CD14-positive monocyte (primary cell): ENCODE measurements at regions of chr16 and their contacts with region 1.

Region 1: GRCh38 chr16:84774810-84775209 is 45.0 kb upstream of the CRISPLD2 start:
- DNase-seq: peak; percentile 80 to 92 (median 88)
- H3K4me3 ChIP-seq: peak overlapping the region in 1 of 3 experiments; percentile 28
- H3K4me3 Mint-ChIP-seq: peak overlapping the region in 1 of 2 donors; percentile 71
- H3K27ac ChIP-seq: peak overlapping the region; percentile 77 to 95
- H3K27ac Mint-ChIP-seq: peak overlapping the region; percentile 85 to 98 (median 95)
- H3K4me1 ChIP-seq: peaks cover 24 to 26% of the 10 kb centered on the region in 2 donors
- H3K4me1 Mint-ChIP-seq: peaks cover 25% of the 10 kb centered on the region
- H3K27me3 ChIP-seq: no peaks in the 10 kb centered on the region
- H3K27me3 Mint-ChIP-seq: peaks cover 0 to 2% (median 2%) of the 10 kb centered on the region in 3 donors
- CTCF ChIP-seq: no peak

Region 2: GRCh38 chr16:84819644-84820324 is 45.0 kb after region 1 on chr16 and contains the start of gene CRISPLD2:
- intact Hi-C with region 1: loop called in 1 of 2 experiments (anchors 5 kb)
- DNase-seq: peak; percentile 92 to 93 (median 93)
- H3K4me3 ChIP-seq: peak within 1 kb of the TSS; percentile 51 to 89 (median 81)
- H3K4me3 Mint-ChIP-seq: peak within 1 kb of the TSS; percentile 86 to 98
- H3K27ac ChIP-seq: peak within 1 kb of the TSS in 1 of 2 donors; percentile 66
- H3K27ac Mint-ChIP-seq: peak within 1 kb of the TSS; percentile 50 to 93 (median 81)
- H3K4me1 ChIP-seq: peaks cover 57 to 59% of the 10 kb centered on the region in 2 donors
- H3K4me1 Mint-ChIP-seq: peaks cover 71% of the 10 kb centered on the region
- H3K27me3 ChIP-seq: peaks cover 0 to 5% of the 10 kb centered on the region in 2 donors
- H3K27me3 Mint-ChIP-seq: peaks cover 0 to 16% (median 10%) of the 10 kb centered on the region in 3 donors
- CTCF ChIP-seq: no peak
- polyA plus RNA-seq, gene CRISPLD2: 40.7 to 90.4 (median 69.0) TPM